Transverse colon (tissue), 4 donors: ENCODE measurements at regions of chr4 and their contacts with region 1.

Region 1: GRCh38 chr4:16264798-16265197 is 38.5 kb upstream of the TAPT1 start:
- DNase-seq: no peak
- H3K4me3 ChIP-seq: no peak overlapping the region
- H3K27ac ChIP-seq: no peak overlapping the region
- H3K4me1 ChIP-seq: no peaks in the 10 kb centered on the region
- H3K27me3 ChIP-seq: no peaks in the 10 kb centered on the region
- CTCF ChIP-seq: peak; percentile 36 to 49 (median 46)
- EP300 ChIP-seq: no peak
- POLR2A ChIP-seq: no peak

Region 2: GRCh38 chr4:16034010-16034829 is 230.6 kb before region 1 on chr4:
- in situ Hi-C with region 1: loop called in 3 of 4 experiments (anchors 10 kb)
- intact Hi-C with region 1: no loop called
- DNase-seq: no peak
- H3K4me3 ChIP-seq: no peak overlapping the region
- H3K27ac ChIP-seq: no peak overlapping the region
- H3K4me1 ChIP-seq: no peaks in the 10 kb centered on the region
- H3K27me3 ChIP-seq: no peaks in the 10 kb centered on the region
- CTCF ChIP-seq: no peak
- EP300 ChIP-seq: no peak
- POLR2A ChIP-seq: no peak

Region 3: DNA sequence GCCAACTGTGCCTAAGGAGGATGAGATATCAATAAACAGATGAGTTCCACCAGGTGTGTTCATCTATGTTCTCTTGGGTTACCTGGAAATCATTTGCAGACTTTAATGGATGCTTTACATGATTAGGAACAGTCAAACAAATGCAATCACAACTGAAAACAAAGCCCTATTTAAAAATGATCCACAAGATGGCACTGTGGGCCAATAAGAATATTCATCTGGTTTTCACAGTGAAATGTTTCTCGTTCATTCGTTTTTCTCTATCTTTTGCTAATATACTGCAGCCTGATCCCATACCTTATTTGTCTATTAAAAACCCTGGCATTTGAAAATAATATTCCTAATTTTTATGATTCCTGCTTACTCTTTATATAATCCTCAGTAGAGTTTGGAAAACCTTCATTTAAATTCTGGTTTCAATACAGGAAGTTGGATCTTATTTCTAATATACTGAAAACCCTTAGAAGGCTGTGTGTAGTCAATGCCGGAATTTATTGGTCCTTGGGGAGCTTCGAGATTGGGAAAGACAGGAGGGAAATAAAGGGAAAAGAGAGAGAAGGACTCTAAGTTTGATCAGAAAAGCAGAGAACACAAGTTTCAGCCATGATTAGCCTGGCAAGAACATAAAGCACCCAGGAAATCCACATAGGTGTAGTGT is 25.2 kb after region 1 on chr4:
- in situ Hi-C with region 1: no loop called
- intact Hi-C with region 1: no loop called
- DNase-seq: no peak
- H3K4me3 ChIP-seq: no peak overlapping the region
- H3K27ac ChIP-seq: no peak overlapping the region
- H3K4me1 ChIP-seq: peaks cover 0 to 12% (median 9%) of the 10 kb centered on the region in 4 donors
- H3K27me3 ChIP-seq: peaks cover 16% of the 10 kb centered on the region
- CTCF ChIP-seq: peak; percentile 51 to 62 (median 56)
- EP300 ChIP-seq: no peak
- POLR2A ChIP-seq: no peak